ENCODE measurements at regions of chr10 and their contacts with region 1.

Region 1: DNA sequence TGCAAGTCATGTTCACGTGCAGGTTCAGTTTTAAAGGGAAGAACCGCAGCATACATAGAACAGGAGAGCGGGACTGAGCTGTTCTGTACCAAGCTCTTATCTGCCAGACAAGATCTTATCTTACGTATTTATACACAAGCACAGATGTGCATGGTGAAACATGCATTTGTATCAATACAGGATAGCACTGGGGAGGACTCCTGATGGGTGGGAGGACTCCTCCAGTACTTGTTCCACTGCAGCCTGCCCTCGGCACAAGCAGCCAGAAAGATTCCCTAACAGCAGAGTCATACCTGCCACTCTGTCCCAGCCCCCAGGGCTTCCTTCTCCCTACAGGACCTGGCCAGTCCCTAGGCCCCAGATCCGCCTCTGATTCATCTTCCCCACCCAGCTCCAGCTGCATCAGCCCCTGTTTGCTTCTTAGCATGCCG is 13.2 kb upstream of the PRKCQ start:
- DNase-seq: peak; percentile 37
- ATAC-seq: peak; percentile 73
- H3K4me3 Mint-ChIP-seq: peak overlapping the region; percentile 33
- H3K27ac Mint-ChIP-seq: peak overlapping the region; percentile 87
- H3K4me1 Mint-ChIP-seq: peaks cover 92% of the 10 kb centered on the region
- H3K27me3 Mint-ChIP-seq: no peaks in the 10 kb centered on the region

Region 2: DNA sequence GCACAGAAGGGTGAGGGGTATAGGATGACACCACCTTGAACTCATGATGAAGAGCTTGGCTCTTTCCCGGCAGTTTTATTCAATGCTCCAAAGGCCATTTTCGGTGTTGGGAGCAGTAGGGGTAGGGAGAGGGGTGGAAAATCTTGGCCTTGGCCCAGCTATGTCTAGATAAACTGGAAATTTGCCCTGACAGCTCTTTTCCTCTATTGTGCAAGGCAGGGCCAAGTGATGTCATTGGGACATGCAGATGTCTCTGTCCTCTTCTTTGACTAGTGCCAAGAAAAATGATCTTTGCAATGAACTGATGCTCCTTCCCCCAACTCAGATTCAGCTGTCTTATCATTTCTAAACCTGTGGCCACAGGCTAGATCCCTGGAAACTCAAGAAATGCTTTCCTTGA is 14.5 kb after region 1 on chr10:
- CTCF ChIA-PET with region 1: interaction called, 11 read pairs
- POLR2A ChIA-PET with region 1: interaction called, 8 read pairs
- intact Hi-C with region 1: loop called in 1 of 2 experiments (anchors 2 kb)
- DNase-seq: no peak
- ATAC-seq: no peak
- H3K4me3 Mint-ChIP-seq: no peak overlapping the region
- H3K27ac Mint-ChIP-seq: peak overlapping the region; percentile 89
- H3K4me1 Mint-ChIP-seq: peaks cover 65% of the 10 kb centered on the region
- H3K27me3 Mint-ChIP-seq: no peaks in the 10 kb centered on the region

Region 3: DNA sequence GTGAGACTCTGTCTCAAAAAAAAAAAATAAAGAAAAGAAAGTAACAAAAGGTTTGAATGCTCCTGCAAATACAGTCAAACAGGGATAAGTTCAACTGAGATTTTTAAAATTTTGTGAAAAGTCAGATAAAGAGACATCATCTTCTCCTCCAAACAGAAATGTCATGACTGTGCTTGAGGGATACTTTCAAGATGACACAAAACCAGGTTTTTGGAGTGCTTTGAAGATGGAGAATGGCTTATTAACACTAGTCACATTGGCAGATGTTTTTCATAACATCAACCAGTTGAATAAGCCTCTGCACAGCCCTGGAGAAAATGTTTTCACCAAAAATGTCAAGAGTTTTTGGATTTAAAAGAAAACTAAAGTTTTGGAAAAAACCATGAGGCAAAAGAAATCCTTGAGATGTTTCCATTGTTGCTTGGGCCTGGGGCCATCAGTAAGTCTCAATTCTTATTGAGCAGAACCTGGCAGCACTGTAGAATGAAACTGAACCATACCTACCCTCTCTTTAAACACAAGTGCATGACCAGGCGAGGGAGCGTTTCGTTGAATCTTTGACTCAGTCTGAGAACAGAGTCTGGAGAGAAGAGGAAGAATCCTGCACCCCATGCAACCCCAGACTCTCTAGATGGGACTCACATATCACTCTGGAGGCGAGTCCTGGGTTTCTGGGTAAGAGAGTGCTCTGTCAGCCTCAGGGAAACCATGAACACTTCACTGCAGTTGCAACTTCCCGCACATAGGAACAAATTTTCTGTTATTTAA is 24.2 kb after region 1 on chr10:
- CTCF ChIA-PET with region 1: no interaction called
- POLR2A ChIA-PET with region 1: no interaction called
- intact Hi-C with region 1: loop called in 1 of 2 experiments (anchors 1 kb)
- DNase-seq: peak; percentile 46
- ATAC-seq: peak; percentile 67
- H3K4me3 Mint-ChIP-seq: no peak overlapping the region
- H3K27ac Mint-ChIP-seq: peak overlapping the region; percentile 84
- H3K4me1 Mint-ChIP-seq: peaks cover 61% of the 10 kb centered on the region
- H3K27me3 Mint-ChIP-seq: no peaks in the 10 kb centered on the region

Region 4: GRCh38 chr10:6741541-6741941 is 148.3 kb after region 1 on chr10:
- CTCF ChIA-PET with region 1: no interaction called
- POLR2A ChIA-PET with region 1: no interaction called
- intact Hi-C with region 1: no loop called
- DNase-seq: no peak
- ATAC-seq: no peak
- H3K4me3 Mint-ChIP-seq: no peak overlapping the region
- H3K27ac Mint-ChIP-seq: no peak overlapping the region
- H3K4me1 Mint-ChIP-seq: no peaks in the 10 kb centered on the region
- H3K27me3 Mint-ChIP-seq: peaks cover 13% of the 10 kb centered on the region